ENCODE measurements at regions of chr6 and their contacts with region 1.

Region 1: GRCh38 chr6:79777713-79778579 is 146.8 kb downstream of the SH3BGRL2 start:
- DNase-seq: peak in 1 of 2 donors; percentile 79
- H3K4me3 ChIP-seq: peak overlapping the region; percentile 40 to 56
- H3K27ac ChIP-seq: no peak overlapping the region
- H3K4me1 ChIP-seq: no peaks in the 10 kb centered on the region
- H3K27me3 ChIP-seq: no peaks in the 10 kb centered on the region
- CTCF ChIP-seq: peak; percentile 73 to 98 (median 98)

Region 2: DNA sequence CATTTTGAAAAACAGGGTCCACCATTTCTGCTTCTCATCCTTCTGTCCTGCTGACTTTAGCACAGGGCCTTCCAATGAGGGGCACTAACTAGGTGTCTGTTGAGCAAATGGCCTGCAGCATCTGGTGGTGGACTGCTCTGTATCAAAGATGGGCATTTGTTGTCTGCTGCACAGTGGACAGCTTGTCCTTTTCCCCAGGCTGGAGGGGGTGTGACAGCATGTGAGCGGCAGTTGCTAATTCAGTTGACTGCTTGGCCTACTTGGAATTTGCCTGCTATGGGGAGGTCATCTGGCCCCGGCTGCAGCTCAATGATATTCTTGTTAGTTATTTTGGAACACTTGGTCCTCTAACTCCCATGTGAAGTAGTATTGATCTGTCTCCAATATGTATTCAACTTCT is 53.1 kb before region 1 on chr6:
- intact Hi-C with region 1: no loop called
- DNase-seq: no peak
- H3K4me3 ChIP-seq: no peak overlapping the region
- H3K27ac ChIP-seq: no peak overlapping the region
- H3K4me1 ChIP-seq: no peaks in the 10 kb centered on the region
- H3K27me3 ChIP-seq: no peaks in the 10 kb centered on the region
- CTCF ChIP-seq: no peak

Region 3: GRCh38 chr6:79813854-79814709 is 36.1 kb after region 1 on chr6:
- intact Hi-C with region 1: loop called (anchors 1 kb)
- DNase-seq: peak in 1 of 2 donors; percentile 83
- H3K4me3 ChIP-seq: no peak overlapping the region
- H3K27ac ChIP-seq: no peak overlapping the region
- H3K4me1 ChIP-seq: no peaks in the 10 kb centered on the region
- H3K27me3 ChIP-seq: no peaks in the 10 kb centered on the region
- CTCF ChIP-seq: peak; percentile 39 to 77 (median 69)

Region 4: GRCh38 chr6:79869600-79870084 is 91.7 kb after region 1 on chr6:
- intact Hi-C with region 1: loop called (anchors 2 kb)
- DNase-seq: peak; percentile 9 to 86
- H3K4me3 ChIP-seq: peak overlapping the region; percentile 28 to 55
- H3K27ac ChIP-seq: no peak overlapping the region
- H3K4me1 ChIP-seq: no peaks in the 10 kb centered on the region
- H3K27me3 ChIP-seq: no peaks in the 10 kb centered on the region
- CTCF ChIP-seq: peak; percentile 64 to 93 (median 90)

Region 5: GRCh38 chr6:79894939-79895338 is 117.0 kb after region 1 on chr6:
- intact Hi-C with region 1: no loop called
- DNase-seq: no peak
- H3K4me3 ChIP-seq: no peak overlapping the region
- H3K27ac ChIP-seq: no peak overlapping the region
- H3K4me1 ChIP-seq: no peaks in the 10 kb centered on the region
- H3K27me3 ChIP-seq: no peaks in the 10 kb centered on the region
- CTCF ChIP-seq: no peak

Region 6: GRCh38 chr6:80094017-80094416 is 316.1 kb after region 1 on chr6:
- intact Hi-C with region 1: loop called (anchors 10 kb)
- DNase-seq: no peak
- H3K4me3 ChIP-seq: no peak overlapping the region
- H3K27ac ChIP-seq: no peak overlapping the region
- H3K4me1 ChIP-seq: no peaks in the 10 kb centered on the region
- H3K27me3 ChIP-seq: no peaks in the 10 kb centered on the region
- CTCF ChIP-seq: peak in 2 of 3 experiments; percentile 46 to 52

Measured in ascending aorta (tissue), 2 donors.